ENCODE measurements at regions of chr12 and their contacts with region 1.

Region 1: GRCh38 chr12:121128970-121129810 is 3.5 kb upstream of the P2RX7 start:
- DNase-seq: peak; percentile 79
- H3K4me3 ChIP-seq: no peak overlapping the region
- H3K27ac ChIP-seq: no peak overlapping the region
- H3K4me1 ChIP-seq: no peaks in the 10 kb centered on the region
- H3K27me3 ChIP-seq: no peaks in the 10 kb centered on the region
- CTCF ChIP-seq: no peak

Region 2: DNA sequence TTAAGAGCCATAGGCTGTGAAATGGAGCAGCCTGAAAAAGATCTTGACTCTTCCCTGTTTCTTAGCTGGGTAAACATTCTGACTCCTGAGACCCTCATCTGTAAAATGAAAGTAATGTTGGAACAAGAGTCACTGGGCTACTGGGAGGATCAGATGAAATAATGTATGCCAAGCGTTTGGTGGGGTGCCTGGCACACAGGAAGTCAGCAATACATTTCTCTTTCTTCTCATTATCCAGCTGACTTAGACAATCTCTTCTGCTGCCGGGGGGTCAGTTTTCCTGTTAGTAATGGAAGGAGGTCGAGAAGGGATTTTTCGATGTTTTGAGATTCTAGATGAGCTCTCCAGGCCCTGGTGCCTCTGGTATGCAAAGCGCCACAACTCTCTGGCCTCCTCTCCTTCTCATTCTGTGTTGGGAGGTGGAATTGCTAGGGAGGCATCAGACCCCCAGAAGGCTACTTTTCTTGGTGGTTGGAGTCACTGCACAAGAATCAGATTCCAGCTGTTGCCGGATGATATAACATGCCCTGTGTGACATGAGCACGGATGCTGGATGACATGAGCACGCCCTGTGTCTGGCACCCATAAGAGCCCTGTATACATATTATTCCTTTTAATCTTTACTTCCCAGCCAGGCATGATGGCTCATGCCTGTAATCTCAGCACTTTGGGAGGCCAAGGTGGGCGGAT is 94.4 kb before region 1 on chr12:
- CTCF ChIA-PET with region 1: no interaction called
- POLR2A ChIA-PET with region 1: interaction called, 11 read pairs
- intact Hi-C with region 1: no loop called
- DNase-seq: peak; percentile 83
- H3K4me3 ChIP-seq: no peak overlapping the region
- H3K27ac ChIP-seq: peak overlapping the region; percentile 64
- H3K4me1 ChIP-seq: peaks cover 30% of the 10 kb centered on the region
- H3K27me3 ChIP-seq: no peaks in the 10 kb centered on the region
- CTCF ChIP-seq: no peak

Region 3: GRCh38 chr12:121494093-121494787 is 365.1 kb after region 1 on chr12:
- CTCF ChIA-PET with region 1: no interaction called
- POLR2A ChIA-PET with region 1: no interaction called
- intact Hi-C with region 1: no loop called
- DNase-seq: peak; percentile 66
- H3K4me3 ChIP-seq: no peak overlapping the region
- H3K27ac ChIP-seq: no peak overlapping the region
- H3K4me1 ChIP-seq: no peaks in the 10 kb centered on the region
- H3K27me3 ChIP-seq: no peaks in the 10 kb centered on the region
- CTCF ChIP-seq: peak; percentile 89